Dendritic cell treated with granulocyte-macrophage colony-stimulating factor and Interleukin-4, amounts not matched to agents 40 ng/mL and 50 ng/mL, for 4 days (primary cell): ENCODE measurements at regions of chr17 and their contacts with region 1.

Region 1: DNA sequence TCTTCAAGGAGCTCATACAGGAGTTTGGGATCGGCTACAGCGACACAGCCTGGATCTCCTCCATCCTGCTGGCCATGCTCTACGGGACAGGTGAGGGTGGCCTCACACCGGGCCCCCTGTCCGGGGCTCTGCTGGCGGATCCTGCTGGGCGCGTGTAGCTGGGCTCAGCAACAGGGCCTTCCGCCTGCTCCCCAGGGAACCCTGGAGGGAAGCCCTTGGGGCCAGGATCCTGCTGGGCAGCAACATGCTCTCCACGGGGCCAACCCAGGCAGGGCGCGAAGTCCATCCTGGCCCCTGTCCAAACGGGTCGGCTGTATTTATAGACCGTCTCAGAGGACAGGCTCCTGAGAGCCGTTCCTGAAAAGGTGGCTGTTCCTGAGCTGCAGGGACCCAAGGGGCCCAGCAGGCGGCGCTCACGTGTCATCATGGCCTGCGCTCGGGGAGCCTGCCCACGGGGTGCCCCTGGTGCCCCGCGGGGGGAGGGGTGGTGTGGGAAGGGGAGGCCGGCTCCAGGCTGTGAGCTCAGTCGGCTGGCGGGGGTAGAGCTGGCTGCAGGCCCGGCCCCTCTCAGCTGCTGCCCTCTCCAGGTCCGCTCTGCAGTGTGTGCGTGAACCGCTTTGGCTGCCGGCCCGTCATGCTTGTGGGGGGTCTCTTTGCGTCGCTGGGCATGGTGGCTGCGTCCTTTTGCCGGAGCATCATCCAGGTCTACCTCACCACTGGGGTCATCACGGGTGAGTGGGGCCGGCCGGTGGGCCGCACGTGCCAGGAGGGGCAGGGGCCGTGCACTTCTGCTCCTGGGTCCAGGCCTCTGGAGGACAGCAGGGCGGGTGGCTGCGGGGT is 7.5 kb downstream of the SLC16A3 start:
- H3K4me3 Mint-ChIP-seq: peak overlapping the region; percentile 35
- H3K27ac Mint-ChIP-seq: peak overlapping the region; percentile 60
- H3K4me1 Mint-ChIP-seq: peaks cover 92% of the 10 kb centered on the region
- H3K27me3 Mint-ChIP-seq: no peaks in the 10 kb centered on the region

Region 2: DNA sequence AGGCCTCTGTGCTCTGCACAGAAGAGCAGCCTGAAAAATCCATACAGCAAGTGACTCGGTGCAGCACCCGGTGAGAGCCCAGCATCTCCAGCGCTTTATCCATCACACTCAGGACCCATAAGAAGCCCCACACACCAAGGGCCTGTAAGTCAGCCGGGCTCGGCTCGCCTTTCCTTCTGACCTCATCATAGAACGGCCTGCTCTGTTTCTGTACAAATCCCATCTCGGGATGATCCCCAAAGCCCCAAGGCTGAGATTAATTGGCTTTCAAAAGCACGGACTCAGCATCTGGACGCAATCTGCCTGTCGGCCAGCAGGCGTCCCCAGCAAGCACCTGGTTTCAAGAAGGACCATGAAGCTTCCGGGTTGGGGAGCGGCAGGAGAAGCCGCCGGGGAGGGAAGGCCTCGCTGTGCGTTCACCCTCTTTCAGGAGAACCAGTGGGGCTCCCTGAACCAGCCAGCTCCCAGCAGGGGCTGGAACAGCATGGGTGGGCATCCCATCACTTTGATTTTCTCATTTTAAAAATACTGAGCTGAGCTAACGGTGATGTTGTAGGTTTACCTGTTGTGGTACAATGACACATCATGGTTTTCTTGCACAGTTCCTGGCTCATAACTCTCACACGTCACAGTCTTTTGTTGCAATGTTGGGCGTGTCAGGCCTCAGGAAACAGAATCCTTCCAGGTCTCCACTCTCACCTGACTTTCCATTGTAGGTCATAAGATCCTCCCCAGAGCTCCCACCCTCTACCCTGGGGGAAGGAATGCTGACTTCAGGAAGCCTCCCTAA is 30.4 kb before region 1 on chr17:
- intact Hi-C with region 1: loop called (anchors 5 kb)
- H3K4me3 Mint-ChIP-seq: no peak overlapping the region
- H3K27ac Mint-ChIP-seq: peak overlapping the region; percentile 74
- H3K4me1 Mint-ChIP-seq: peaks cover 25% of the 10 kb centered on the region
- H3K27me3 Mint-ChIP-seq: no peaks in the 10 kb centered on the region

Region 3: GRCh38 chr17:82225368-82226029 is 10.9 kb before region 1 on chr17:
- intact Hi-C with region 1: no loop called
- H3K4me3 Mint-ChIP-seq: no peak overlapping the region
- H3K27ac Mint-ChIP-seq: peak overlapping the region; percentile 51
- H3K4me1 Mint-ChIP-seq: peaks cover 57% of the 10 kb centered on the region
- H3K27me3 Mint-ChIP-seq: no peaks in the 10 kb centered on the region

Region 4: GRCh38 chr17:82320956-82321927 is 84.9 kb after region 1 on chr17:
- intact Hi-C with region 1: loop called (anchors 5 kb)
- H3K4me3 Mint-ChIP-seq: no peak overlapping the region
- H3K27ac Mint-ChIP-seq: no peak overlapping the region
- H3K4me1 Mint-ChIP-seq: peaks cover 2% of the 10 kb centered on the region
- H3K27me3 Mint-ChIP-seq: peaks cover 33% of the 10 kb centered on the region